HCT116 (cell line): ENCODE measurements at regions of chr10 and their contacts with region 1.

Region 1: DNA sequence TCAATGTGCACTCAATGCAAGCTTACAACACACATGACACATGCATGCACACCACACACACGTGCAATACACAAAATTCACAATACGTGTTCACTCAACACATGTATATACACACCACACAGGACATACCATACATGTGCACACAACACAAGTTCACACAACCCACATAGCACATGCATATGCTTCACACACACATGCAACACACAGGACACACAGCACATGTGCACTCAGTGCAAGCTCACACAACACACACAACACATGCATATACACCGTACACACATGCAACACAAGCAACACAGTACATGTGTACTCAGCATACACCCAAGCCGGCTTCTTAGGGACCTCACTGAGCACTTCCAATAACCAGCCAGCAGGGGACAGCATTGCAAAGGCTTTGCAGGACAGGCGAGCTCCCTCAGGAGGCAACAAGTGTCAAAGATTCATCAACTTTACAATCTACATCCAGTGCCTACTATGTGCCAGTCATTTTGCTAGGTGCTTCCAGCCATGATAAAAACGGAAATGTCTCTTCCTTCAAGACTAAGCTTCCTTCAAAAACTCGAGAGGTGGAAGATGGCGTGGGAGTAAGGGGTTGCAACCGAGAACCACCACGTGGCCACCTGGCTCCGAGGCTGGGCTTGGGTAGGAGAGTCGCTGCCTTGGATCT is 61.1 kb downstream of the JCAD start:
- DNase-seq: peak; percentile 75
- ATAC-seq: peak; percentile 83
- H3K4me3 ChIP-seq: no peak overlapping the region
- H3K27ac ChIP-seq: no peak overlapping the region
- H3K4me1 ChIP-seq: peaks cover 0 to 7% of the 10 kb centered on the region in 2 experiments; a peak in 2 of 4 replicates
- H3K27me3 ChIP-seq: no peaks in the 10 kb centered on the region
- CTCF ChIP-seq: peak; percentile 99 to 100 (median 100)
- POLR2A ChIP-seq: no peak
- RAD21 ChIP-seq: peak; percentile 97

Region 2: DNA sequence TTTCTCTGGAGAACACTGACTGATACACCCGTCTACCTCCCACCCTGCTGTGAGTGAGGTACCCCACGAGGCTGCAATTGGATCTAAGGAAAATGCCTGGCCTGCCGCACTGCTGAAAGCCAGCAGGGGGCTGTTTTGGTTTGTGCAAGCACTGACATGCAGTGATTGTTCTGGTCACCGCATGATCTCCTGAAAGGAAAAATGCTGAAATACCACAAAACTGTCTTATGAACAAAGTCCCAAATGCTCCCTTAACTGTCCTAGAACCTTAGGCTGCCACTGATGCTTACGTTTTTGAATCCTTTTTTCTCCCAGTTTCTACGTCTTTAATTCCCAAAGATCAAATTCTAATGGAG is 71.6 kb before region 1 on chr10:
- CTCF ChIA-PET with region 1: no interaction called
- POLR2A ChIA-PET with region 1: no interaction called
- RAD21 ChIA-PET with region 1: no interaction called
- intact Hi-C with region 1: loop called (anchors 2 kb)
- DNase-seq: no peak
- ATAC-seq: peak; percentile 76
- H3K4me3 ChIP-seq: no peak overlapping the region
- H3K27ac ChIP-seq: no peak overlapping the region
- H3K4me1 ChIP-seq: no peaks in the 10 kb centered on the region
- H3K27me3 ChIP-seq: peaks cover 6% of the 10 kb centered on the region; the same call in 1 of the 2 replicates
- CTCF ChIP-seq: peak in 2 of 3 experiments; percentile 47 to 49; a peak in 3 of 6 replicates
- POLR2A ChIP-seq: no peak
- RAD21 ChIP-seq: peak; percentile 48

Region 3: GRCh38 chr10:29987471-29987870 is 10.8 kb before region 1 on chr10:
- CTCF ChIA-PET with region 1: no interaction called
- POLR2A ChIA-PET with region 1: no interaction called
- RAD21 ChIA-PET with region 1: no interaction called
- intact Hi-C with region 1: no loop called
- DNase-seq: no peak
- ATAC-seq: no peak
- H3K4me3 ChIP-seq: no peak overlapping the region
- H3K27ac ChIP-seq: no peak overlapping the region
- H3K4me1 ChIP-seq: no peaks in the 10 kb centered on the region
- H3K27me3 ChIP-seq: no peaks in the 10 kb centered on the region
- CTCF ChIP-seq: no peak
- POLR2A ChIP-seq: no peak
- RAD21 ChIP-seq: no peak

Region 4: GRCh38 chr10:30186371-30186875 is 188.1 kb after region 1 on chr10:
- CTCF ChIA-PET with region 1: no interaction called
- POLR2A ChIA-PET with region 1: no interaction called
- RAD21 ChIA-PET with region 1: interaction called in 1 of 2 experiments, 3 read pairs
- intact Hi-C with region 1: loop called (anchors 1 kb)
- DNase-seq: no peak
- ATAC-seq: peak; percentile 62
- H3K4me3 ChIP-seq: peak overlapping the region in 1 of 2 experiments; percentile 25; a peak in 2 of 4 replicates
- H3K27ac ChIP-seq: no peak overlapping the region
- H3K4me1 ChIP-seq: peaks cover 4 to 28% of the 10 kb centered on the region in 2 experiments; a peak in 3 of 4 replicates
- H3K27me3 ChIP-seq: no peaks in the 10 kb centered on the region
- CTCF ChIP-seq: peak; percentile 27 to 60 (median 49); a peak in 4 of 6 replicates
- POLR2A ChIP-seq: no peak
- RAD21 ChIP-seq: peak; percentile 76

Region 5: DNA sequence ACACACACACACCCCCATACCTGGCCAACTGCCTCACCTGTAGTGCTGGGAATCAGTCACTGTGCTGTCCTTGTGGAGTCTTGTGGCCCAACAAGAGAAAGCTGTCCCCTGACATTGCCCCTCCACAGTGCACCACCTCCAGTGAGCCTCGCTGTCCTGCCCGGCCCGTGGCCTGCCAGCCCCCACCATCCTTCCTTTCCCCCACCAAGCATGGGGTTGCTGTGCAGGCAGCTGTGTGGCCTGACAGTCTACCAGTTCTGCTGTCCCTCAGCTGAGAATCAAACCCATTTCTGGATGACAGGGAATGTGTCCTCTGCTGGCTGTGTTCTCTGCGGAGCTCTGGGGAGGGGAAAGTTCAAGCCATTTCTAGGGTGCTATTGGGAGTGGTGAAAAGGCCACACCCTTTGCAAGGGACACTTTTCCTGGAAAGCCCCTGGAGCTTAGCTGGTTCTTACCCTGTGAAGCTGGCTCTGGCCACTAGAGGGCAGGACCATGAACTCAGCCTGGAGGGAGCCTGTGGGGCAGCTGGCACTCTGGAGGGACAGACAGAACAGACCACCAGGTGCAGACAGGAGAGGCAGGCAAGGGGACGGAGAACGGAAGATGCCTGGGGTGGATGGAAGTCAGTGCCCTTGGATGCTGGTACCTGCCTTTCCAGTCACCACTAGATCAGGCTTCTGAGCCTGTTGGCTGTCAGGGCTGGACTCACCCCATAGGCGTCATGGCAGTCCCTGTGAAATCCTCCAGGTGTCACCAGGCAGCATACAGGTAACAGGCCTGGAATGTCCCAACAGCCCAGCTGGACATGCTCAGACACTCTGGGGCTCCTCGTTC is 361.3 kb after region 1 on chr10:
- CTCF ChIA-PET with region 1: interaction called, 10 read pairs
- POLR2A ChIA-PET with region 1: no interaction called
- RAD21 ChIA-PET with region 1: interaction called in 1 of 2 experiments, 3 read pairs
- intact Hi-C with region 1: no loop called
- DNase-seq: peak; percentile 82
- ATAC-seq: peak; percentile 97
- H3K4me3 ChIP-seq: no peak overlapping the region; a peak in 1 of 4 replicates
- H3K27ac ChIP-seq: no peak overlapping the region
- H3K4me1 ChIP-seq: peaks cover 6 to 21% of the 10 kb centered on the region in 2 experiments; a peak in 3 of 4 replicates
- H3K27me3 ChIP-seq: no peaks in the 10 kb centered on the region
- CTCF ChIP-seq: peak; percentile 90 to 98 (median 95)
- POLR2A ChIP-seq: no peak
- RAD21 ChIP-seq: peak; percentile 69

Region 6: DNA sequence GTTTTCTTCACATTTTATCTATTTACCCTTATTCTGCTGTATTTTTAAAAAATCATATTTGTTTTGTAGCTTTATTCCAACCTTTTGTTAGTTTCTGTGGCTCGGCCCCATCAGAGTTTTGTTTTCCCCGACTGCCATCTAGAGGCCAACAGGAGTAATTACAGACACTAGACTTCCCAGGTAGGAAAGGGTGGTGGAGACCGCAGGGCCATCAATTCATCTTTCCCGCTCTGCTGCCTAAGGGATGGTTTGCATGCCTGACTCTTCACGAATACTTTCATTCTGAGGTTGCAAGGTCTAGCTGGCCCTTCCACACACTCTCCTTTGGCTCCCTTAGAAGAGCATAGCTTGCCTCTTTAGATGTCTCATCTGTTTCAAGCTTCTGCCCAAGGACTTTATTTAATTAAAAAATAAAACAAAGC is 593.0 kb after region 1 on chr10:
- CTCF ChIA-PET with region 1: interaction called, 10 read pairs
- POLR2A ChIA-PET with region 1: no interaction called
- RAD21 ChIA-PET with region 1: no interaction called
- intact Hi-C with region 1: loop called (anchors 5 kb)
- DNase-seq: peak; percentile 37
- ATAC-seq: peak; percentile 97
- H3K4me3 ChIP-seq: no peak overlapping the region
- H3K27ac ChIP-seq: no peak overlapping the region
- H3K4me1 ChIP-seq: 0 out of 4 replicates have a peak, but pooled peaks cover 0 to 2% of the 10 kb centered on the region in 2 experiments
- H3K27me3 ChIP-seq: no peaks in the 10 kb centered on the region
- CTCF ChIP-seq: peak; percentile 69 to 76 (median 75)
- POLR2A ChIP-seq: no peak
- RAD21 ChIP-seq: peak; percentile 76

Region 7: DNA sequence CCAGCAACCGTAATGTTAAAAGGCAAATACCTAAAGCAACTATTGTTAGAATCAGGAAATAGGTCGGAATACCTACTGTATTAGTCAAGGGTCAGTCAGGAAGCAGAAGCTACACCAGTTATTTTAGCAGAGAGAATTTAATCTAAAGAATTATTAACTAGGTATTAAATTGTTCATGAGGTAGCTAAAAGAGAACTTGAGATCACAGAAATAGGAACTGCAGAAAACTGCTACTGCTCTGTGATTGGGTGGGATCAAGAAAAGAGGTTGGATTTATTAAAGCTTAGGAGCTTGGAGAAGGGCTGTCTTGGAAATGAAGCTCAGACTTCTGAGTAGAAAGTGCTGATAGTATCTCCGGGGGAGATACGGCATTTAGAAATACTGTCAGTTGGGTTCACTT is 1053.4 kb after region 1 on chr10:
- CTCF ChIA-PET with region 1: no interaction called
- POLR2A ChIA-PET with region 1: no interaction called
- RAD21 ChIA-PET with region 1: no interaction called
- intact Hi-C with region 1: no loop called
- DNase-seq: no peak
- ATAC-seq: peak; percentile 42; the same call in 1 of the 2 replicates
- H3K4me3 ChIP-seq: peak overlapping the region in 1 of 2 experiments; percentile 0; a peak in 1 of 4 replicates
- H3K27ac ChIP-seq: no peak overlapping the region
- H3K4me1 ChIP-seq: peaks cover 0 to 10% of the 10 kb centered on the region in 2 experiments; a peak in 2 of 4 replicates
- H3K27me3 ChIP-seq: no peaks in the 10 kb centered on the region
- CTCF ChIP-seq: no peak
- POLR2A ChIP-seq: no peak
- RAD21 ChIP-seq: no peak